HepG2 (cell line): ENCODE measurements at regions of chr6 and their contacts with region 1.

Region 1: GRCh38 chr6:46221222-46221793 is 50.5 kb upstream of the ENPP5 start:
- DNase-seq: peak; percentile 26
- ATAC-seq: peak; percentile 88
- H3K4me3 ChIP-seq: no peak overlapping the region
- H3K27ac ChIP-seq: no peak overlapping the region
- H3K4me1 ChIP-seq: no peaks in the 10 kb centered on the region
- H3K27me3 ChIP-seq: no peaks in the 10 kb centered on the region
- CTCF ChIP-seq: peak; percentile 76
- EP300 ChIP-seq: no peak
- POLR2A ChIP-seq: no peak
- RAD21 ChIP-seq: peak; percentile 74

Region 2: GRCh38 chr6:46160102-46160501 is 61.2 kb before region 1 on chr6:
- CTCF ChIA-PET with region 1: no interaction called
- POLR2A ChIA-PET with region 1: no interaction called
- in situ Hi-C with region 1: no loop called
- intact Hi-C with region 1: no loop called
- DNase-seq: no peak
- ATAC-seq: no peak
- H3K4me3 ChIP-seq: no peak overlapping the region
- H3K27ac ChIP-seq: no peak overlapping the region
- H3K4me1 ChIP-seq: no peaks in the 10 kb centered on the region
- H3K27me3 ChIP-seq: no peaks in the 10 kb centered on the region
- CTCF ChIP-seq: no peak
- EP300 ChIP-seq: no peak
- POLR2A ChIP-seq: no peak
- RAD21 ChIP-seq: no peak

Region 3: DNA sequence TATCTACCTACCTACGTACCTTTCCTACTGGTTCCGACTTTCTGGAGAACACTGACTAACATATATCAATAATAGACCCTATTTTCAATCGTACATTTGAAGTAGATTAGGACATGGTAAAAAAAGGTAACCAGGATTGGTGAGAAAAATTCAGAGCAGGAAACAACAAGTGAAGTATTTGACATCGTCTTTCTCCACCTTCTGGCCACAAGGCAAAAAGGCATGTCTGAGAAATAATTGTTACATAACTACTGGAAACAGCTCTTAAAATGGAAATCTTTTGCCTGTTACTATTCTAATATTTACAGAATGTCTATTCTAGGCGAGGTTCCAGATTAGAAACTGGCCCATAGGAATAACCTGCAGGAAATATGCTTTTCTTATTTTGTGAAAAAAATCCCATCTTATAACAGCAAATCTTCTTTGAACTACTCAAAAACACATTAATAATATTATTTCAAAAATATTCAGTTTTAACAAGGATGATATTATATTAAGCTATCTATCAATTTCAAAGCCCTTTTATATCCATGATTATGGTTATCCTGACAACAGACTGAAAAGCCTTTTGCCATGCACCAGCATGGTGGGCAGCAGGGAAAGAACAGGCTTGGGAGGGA is 189.1 kb after region 1 on chr6:
- CTCF ChIA-PET with region 1: interaction called, 24 read pairs
- POLR2A ChIA-PET with region 1: no interaction called
- in situ Hi-C with region 1: loop called (anchors 5 kb)
- intact Hi-C with region 1: no loop called
- DNase-seq: peak; percentile 57
- ATAC-seq: no peak; the same call in 2 of the 3 replicates
- H3K4me3 ChIP-seq: no peak overlapping the region
- H3K27ac ChIP-seq: no peak overlapping the region
- H3K4me1 ChIP-seq: no peaks in the 10 kb centered on the region
- H3K27me3 ChIP-seq: no peaks in the 10 kb centered on the region
- CTCF ChIP-seq: peak; percentile 80
- EP300 ChIP-seq: no peak
- POLR2A ChIP-seq: no peak
- RAD21 ChIP-seq: peak; percentile 77

Region 4: DNA sequence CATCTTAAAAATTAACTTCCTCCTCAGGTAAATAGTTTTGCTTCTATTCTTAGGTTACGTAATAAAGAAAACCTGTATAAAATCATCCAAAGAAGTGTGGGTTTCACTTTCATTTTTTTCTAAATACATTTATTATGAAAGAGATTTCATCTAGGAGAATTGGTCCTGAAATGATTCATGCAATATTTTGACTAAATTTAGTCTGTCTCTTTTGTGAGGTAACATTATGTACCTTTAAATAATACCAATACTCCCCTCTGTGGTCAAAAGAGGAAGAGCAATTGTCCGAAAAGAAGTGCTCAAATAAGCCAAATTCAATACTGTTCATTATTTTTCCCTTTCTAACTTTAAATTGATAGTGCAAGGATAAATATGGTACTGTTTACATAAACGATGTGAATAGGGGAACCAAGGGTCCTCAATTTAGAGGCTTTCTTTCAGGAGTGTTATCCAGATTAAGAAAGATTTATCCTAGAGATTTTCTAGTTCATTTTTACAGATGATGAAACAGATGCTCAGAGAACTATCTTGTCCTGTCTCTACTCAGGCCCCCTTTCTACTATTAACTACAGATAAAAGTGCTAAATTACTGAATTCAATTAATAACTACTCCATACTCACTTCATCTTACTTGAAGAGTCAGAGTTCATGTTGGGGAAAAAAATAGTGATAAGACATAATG is 405.1 kb after region 1 on chr6:
- CTCF ChIA-PET with region 1: no interaction called
- POLR2A ChIA-PET with region 1: no interaction called
- in situ Hi-C with region 1: loop called (anchors 10 kb)
- intact Hi-C with region 1: loop called (anchors 1 kb)
- DNase-seq: peak; percentile 33
- ATAC-seq: peak; percentile 58
- H3K4me3 ChIP-seq: no peak overlapping the region
- H3K27ac ChIP-seq: no peak overlapping the region
- H3K4me1 ChIP-seq: no peaks in the 10 kb centered on the region
- H3K27me3 ChIP-seq: no peaks in the 10 kb centered on the region
- CTCF ChIP-seq: peak; percentile 63
- EP300 ChIP-seq: no peak
- POLR2A ChIP-seq: no peak
- RAD21 ChIP-seq: no peak

Region 5: DNA sequence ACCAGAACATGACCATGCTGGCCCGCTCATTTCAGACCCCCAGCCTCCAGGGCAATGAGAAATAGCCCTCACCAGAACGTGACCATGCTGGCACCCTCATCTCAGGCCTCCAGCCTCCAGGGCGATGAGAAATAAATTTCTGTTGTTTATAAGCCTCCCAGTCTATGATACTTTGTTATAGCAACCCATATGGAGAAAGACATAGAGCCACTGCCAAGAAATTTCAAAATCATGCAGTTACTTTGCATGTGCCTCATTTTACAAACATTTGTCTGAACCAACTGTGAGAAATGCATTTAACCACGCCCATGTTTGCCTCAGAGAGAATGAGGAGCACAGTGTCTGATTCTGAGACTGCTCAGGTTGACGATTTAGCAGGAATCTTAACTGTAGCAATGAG is 415.8 kb after region 1 on chr6:
- CTCF ChIA-PET with region 1: no interaction called
- POLR2A ChIA-PET with region 1: no interaction called
- in situ Hi-C with region 1: loop called (anchors 10 kb)
- intact Hi-C with region 1: no loop called
- DNase-seq: no peak
- ATAC-seq: no peak
- H3K4me3 ChIP-seq: no peak overlapping the region
- H3K27ac ChIP-seq: no peak overlapping the region
- H3K4me1 ChIP-seq: no peaks in the 10 kb centered on the region
- H3K27me3 ChIP-seq: no peaks in the 10 kb centered on the region
- CTCF ChIP-seq: no peak
- EP300 ChIP-seq: no peak
- POLR2A ChIP-seq: no peak
- RAD21 ChIP-seq: no peak

Region 6: DNA sequence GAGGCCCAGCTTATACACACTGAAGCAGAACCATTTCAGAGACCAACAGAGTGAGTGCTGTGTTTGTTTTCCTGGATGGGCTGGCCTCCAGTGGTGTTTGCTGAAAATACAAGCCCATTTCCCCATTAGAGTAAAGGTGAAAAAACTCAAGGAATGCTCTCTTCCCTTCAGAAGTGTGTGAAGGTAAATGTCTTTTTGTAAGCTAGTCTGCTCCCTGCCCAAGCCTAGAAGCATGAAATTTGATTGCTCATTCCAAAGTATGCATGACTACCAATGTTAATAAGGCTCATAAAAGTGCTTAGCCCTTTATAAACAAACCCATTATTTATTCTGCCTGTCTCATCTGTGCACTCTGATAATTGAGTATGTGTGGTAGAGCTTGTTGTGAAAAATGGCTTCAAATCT is 761.7 kb after region 1 on chr6:
- CTCF ChIA-PET with region 1: no interaction called
- POLR2A ChIA-PET with region 1: no interaction called
- in situ Hi-C with region 1: loop called (anchors 25 kb)
- intact Hi-C with region 1: no loop called
- DNase-seq: no peak
- ATAC-seq: peak; percentile 58
- H3K4me3 ChIP-seq: no peak overlapping the region
- H3K27ac ChIP-seq: no peak overlapping the region
- H3K4me1 ChIP-seq: peaks cover 9% of the 10 kb centered on the region; the same call in 1 of the 2 replicates
- H3K27me3 ChIP-seq: no peaks in the 10 kb centered on the region
- CTCF ChIP-seq: no peak
- EP300 ChIP-seq: no peak
- POLR2A ChIP-seq: no peak
- RAD21 ChIP-seq: no peak